ENCODE measurements at regions of chr7 and their contacts with region 1.

Region 1: DNA sequence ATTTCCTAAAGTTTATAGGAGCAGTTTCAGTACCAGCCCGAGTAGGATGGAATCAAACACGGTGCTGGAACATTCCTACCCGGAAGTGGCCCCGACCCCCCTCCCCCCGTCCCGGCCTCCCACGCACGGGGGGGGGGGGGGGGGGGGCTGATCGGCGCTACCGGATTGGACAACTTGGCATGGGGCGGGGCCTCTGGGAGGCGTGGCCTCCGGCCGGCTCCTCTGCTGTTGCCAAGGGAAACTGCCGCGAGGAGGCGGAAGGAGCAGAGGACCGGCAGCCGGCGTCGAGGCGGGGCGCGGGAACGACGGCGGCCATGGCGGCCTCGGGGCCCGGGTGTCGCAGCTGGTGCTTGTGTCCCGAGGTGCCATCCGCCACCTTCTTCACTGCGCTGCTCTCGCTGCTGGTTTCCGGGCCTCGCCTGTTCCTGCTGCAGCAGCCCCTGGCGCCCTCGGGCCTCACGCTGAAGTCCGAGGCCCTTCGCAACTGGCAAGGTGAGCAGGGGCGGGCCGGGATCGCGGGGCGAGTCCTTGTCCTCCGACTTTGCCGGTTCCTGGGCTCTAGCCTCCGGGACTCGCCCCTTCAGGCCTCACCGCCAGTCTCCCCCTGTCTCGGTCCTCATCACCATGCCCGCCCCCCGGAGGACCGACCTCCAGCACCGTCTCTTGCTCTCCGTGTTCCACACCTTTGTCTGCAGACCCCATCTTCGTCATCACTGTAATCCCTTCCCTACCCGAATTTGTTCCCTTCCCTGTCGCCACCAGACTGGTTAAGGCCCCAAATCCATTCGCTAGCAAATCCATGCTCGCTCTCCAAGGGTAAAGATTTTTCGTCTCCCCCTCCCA is at the start of gene RHBDD2:
- DNase-seq: peak; percentile 97
- H3K4me3 Mint-ChIP-seq: peak within 1 kb of the TSS; percentile 93
- H3K27ac Mint-ChIP-seq: peak within 1 kb of the TSS; percentile 91
- H3K4me1 Mint-ChIP-seq: peaks cover 31% of the 10 kb centered on the region
- H3K27me3 Mint-ChIP-seq: no peaks in the 10 kb centered on the region
- total RNA-seq, gene RHBDD2: 21.5 to 24.0 TPM

Region 2: GRCh38 chr7:75776295-75776971 is 102.6 kb before region 1 on chr7:
- CTCF ChIA-PET with region 1: no interaction called
- intact Hi-C with region 1: loop called (anchors 2 kb)
- DNase-seq: peak; percentile 81
- H3K4me3 Mint-ChIP-seq: no peak overlapping the region
- H3K27ac Mint-ChIP-seq: peak overlapping the region; percentile 81
- H3K4me1 Mint-ChIP-seq: peaks cover 32% of the 10 kb centered on the region
- H3K27me3 Mint-ChIP-seq: peaks cover 7% of the 10 kb centered on the region

Region 3: GRCh38 chr7:75994388-75995051 is 115.5 kb after region 1 on chr7 and contains the start of gene TMEM120A:
- CTCF ChIA-PET with region 1: no interaction called
- intact Hi-C with region 1: loop called (anchors 1 kb)
- DNase-seq: peak; percentile 94
- H3K4me3 Mint-ChIP-seq: peak within 1 kb of the TSS; percentile 64
- H3K27ac Mint-ChIP-seq: no peak within 1 kb of the TSS
- H3K4me1 Mint-ChIP-seq: peaks cover 23% of the 10 kb centered on the region
- H3K27me3 Mint-ChIP-seq: no peaks in the 10 kb centered on the region
- total RNA-seq, gene TMEM120A: 17.0 to 22.4 TPM

Region 4: DNA sequence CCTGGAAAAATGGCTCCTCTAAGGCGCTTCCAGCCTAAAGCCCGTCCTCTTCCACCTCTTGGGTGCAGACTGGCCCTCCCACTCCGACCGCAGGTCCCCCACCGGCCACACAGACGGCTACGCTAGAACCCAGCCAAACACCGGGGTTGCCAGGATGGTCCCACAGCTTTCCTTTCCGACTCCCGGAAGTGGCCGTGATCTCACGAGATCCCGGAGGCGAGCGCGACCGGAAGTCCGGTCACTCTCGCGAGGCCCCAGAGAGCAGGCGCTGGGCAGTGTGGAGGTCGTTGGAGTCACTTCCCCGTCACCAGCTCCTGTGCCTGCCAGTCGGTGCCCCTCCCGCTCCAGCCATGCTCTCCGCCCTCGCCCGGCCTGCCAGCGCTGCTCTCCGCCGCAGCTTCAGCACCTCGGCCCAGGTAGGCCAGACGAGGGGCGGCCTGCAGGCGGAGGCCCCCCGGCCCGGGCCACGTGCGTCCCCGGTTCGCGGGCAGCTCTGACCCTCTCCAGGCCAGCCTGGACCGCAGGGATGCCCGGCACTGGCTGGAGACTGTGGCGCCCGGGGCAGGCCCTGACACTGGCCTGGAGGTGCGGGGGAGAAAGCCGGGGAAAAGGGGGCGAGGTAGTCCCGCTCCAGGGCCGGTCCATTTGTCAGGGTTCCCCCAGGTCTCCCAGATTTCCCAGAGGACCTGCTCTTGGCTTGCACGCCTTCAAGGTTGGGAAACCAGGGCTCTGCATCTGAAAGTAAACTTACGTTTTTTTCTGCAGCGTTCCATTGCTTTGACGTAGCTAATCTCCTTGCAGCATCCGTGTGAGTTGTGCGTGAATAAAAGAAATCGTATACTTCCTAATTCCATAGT is 169.0 kb after region 1 on chr7 and contains the starts of genes MDH2 and STYXL1:
- CTCF ChIA-PET with region 1: interaction called, 3 read pairs
- intact Hi-C with region 1: loop called (anchors 1 kb)
- DNase-seq: peak; percentile 95
- H3K4me3 Mint-ChIP-seq: peak within 1 kb of the TSS; percentile 98
- H3K27ac Mint-ChIP-seq: peak within 1 kb of the TSS; percentile 96
- H3K4me1 Mint-ChIP-seq: peaks cover 54% of the 10 kb centered on the region
- H3K27me3 Mint-ChIP-seq: no peaks in the 10 kb centered on the region
- total RNA-seq, gene MDH2: 325 TPM
- total RNA-seq, gene STYXL1: 27.6 to 28.1 TPM

Region 5: DNA sequence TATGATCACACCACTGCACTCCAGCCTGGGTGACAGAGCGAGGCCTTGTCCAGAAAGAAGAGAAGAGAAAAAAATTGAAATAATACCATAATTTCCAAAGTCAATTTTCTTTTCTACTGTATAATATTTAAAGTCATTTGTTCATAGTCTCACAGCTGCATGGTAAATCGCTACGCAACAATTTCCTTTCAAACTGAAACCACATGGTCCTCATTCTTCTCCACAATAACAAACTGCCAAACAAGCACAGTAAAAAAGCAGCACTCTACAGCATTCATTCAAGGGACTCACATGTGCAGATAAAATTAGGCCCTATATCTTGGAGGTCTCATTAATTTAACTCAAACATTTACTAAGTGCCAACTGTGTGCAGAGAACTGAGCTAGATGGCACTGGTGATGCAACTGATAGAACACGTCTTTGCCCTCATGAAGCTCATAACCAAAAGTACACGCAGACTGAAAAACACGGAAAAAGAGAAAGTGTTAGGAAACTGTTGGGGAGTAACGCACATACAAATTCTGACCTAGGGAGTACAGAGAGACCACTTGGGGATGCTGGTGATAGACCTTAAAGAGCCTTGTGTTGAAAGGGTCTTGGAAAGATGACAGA is 254.3 kb after region 1 on chr7:
- CTCF ChIA-PET with region 1: no interaction called
- intact Hi-C with region 1: no loop called
- DNase-seq: no peak
- H3K4me3 Mint-ChIP-seq: peak overlapping the region; percentile 17
- H3K27ac Mint-ChIP-seq: peak overlapping the region; percentile 4
- H3K4me1 Mint-ChIP-seq: peaks cover 19% of the 10 kb centered on the region
- H3K27me3 Mint-ChIP-seq: no peaks in the 10 kb centered on the region

Region 6: GRCh38 chr7:76262683-76263402 is 383.9 kb after region 1 on chr7:
- CTCF ChIA-PET with region 1: no interaction called
- intact Hi-C with region 1: loop called (anchors 10 kb)
- DNase-seq: peak; percentile 60
- H3K4me3 Mint-ChIP-seq: no peak overlapping the region
- H3K27ac Mint-ChIP-seq: no peak overlapping the region
- H3K4me1 Mint-ChIP-seq: peaks cover 4% of the 10 kb centered on the region
- H3K27me3 Mint-ChIP-seq: peaks cover 21% of the 10 kb centered on the region